ENCODE measurements at regions of chr11 and their contacts with region 1.

Region 1: DNA sequence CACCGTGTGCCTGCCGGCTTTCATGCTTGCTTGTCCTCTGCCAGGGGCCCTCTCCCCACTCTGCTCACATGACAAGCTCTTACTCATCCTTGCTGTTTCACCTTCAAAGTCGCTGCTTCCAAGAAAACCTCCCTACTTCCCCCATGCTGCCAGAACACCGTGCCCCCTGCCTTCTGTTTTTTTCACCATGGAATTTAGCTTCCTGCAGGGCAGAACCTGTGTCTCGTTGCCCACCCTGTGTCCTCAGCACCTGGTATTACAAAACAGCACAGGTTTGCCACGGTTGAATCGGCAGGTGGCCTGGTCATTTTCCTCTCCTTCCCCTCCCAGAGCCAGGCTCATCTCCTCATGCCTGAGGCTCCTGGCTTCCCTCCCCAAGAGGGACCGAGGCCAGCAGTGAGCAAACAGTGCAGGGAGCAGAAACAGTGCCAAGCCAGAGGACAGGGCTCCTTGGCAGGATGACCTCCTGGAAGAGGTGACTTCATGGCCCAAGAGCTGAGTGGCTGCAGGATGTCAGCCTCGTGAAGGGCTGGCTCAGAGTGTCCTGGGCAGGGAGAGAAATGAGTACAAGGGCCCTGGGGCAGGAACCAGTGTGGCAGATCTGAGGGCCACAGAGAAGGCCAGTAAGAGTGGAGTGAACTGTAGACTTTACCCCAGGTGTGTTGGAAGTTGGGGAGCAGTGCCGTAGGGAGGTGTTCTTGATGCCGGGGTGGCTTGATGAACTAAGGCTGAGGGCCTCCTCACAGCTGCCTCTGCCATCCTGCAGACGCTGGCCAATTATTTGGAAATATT is 22.8 kb upstream of the PPFIA1 start:
- DNase-seq: peak; percentile 83 to 92
- H3K4me3 ChIP-seq: peak overlapping the region in 1 of 3 donors; percentile 5
- H3K27ac ChIP-seq: peak overlapping the region; percentile 77 to 93
- H3K4me1 ChIP-seq: peaks cover 0 to 9% of the 10 kb centered on the region in 2 donors
- H3K27me3 ChIP-seq: no peaks in the 10 kb centered on the region
- CTCF ChIP-seq: no peak
- POLR2A ChIP-seq: no peak

Region 2: GRCh38 chr11:70183483-70184169 is 64.0 kb before region 1 on chr11:
- intact Hi-C with region 1: no loop called
- DNase-seq: peak; percentile 85
- H3K4me3 ChIP-seq: no peak overlapping the region
- H3K27ac ChIP-seq: peak overlapping the region; percentile 68 to 72
- H3K4me1 ChIP-seq: peaks cover 0 to 10% of the 10 kb centered on the region in 2 donors
- H3K27me3 ChIP-seq: no peaks in the 10 kb centered on the region
- CTCF ChIP-seq: no peak
- POLR2A ChIP-seq: no peak

Region 3: DNA sequence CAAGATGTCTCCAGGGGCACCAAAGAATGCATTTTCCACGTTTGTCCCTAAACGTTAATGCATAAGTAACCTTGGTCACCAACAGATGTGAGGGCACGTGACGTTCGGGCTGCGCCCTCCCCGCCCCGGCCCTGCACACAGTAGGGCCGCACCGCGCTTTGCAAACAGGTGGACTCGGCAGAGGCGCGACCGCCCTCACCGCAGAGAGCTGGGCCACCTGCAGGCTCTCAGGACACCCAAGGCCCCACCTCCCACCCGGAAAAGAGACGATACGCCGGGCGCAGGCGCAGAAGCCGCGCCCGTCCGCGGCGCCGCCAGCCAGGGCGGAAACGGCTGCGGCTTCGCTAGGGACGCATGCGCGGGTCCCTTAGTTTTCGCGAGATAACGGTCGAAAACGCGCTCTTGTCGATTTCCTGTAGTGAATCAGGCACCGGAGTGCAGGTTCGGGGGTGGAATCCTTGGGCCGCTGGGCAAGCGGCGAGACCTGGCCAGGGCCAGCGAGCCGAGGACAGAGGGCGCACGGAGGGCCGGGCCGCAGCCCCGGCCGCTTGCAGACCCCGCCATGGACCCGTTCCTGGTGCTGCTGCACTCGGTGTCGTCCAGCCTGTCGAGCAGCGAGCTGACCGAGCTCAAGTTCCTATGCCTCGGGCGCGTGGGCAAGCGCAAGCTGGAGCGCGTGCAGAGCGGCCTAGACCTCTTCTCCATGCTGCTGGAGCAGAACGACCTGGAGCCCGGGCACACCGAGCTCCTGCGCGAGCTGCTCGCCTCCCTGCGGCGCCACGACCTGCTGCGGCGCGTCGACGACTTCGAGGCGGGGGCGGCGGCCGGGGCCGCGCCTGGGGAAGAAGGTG is 44.5 kb before region 1 on chr11 and contains the start of gene FADD:
- intact Hi-C with region 1: loop called (anchors 10 kb)
- DNase-seq: peak; percentile 83 to 88
- H3K4me3 ChIP-seq: peak within 1 kb of the TSS; percentile 82 to 98 (median 95)
- H3K27ac ChIP-seq: peak within 1 kb of the TSS; percentile 90 to 94
- H3K4me1 ChIP-seq: peaks cover 6 to 15% of the 10 kb centered on the region in 2 donors
- H3K27me3 ChIP-seq: no peaks in the 10 kb centered on the region
- CTCF ChIP-seq: no peak
- POLR2A ChIP-seq: peak; percentile 56
- total RNA-seq, gene FADD: 17.6 to 33.1 (median 30.2) TPM

Region 4: DNA sequence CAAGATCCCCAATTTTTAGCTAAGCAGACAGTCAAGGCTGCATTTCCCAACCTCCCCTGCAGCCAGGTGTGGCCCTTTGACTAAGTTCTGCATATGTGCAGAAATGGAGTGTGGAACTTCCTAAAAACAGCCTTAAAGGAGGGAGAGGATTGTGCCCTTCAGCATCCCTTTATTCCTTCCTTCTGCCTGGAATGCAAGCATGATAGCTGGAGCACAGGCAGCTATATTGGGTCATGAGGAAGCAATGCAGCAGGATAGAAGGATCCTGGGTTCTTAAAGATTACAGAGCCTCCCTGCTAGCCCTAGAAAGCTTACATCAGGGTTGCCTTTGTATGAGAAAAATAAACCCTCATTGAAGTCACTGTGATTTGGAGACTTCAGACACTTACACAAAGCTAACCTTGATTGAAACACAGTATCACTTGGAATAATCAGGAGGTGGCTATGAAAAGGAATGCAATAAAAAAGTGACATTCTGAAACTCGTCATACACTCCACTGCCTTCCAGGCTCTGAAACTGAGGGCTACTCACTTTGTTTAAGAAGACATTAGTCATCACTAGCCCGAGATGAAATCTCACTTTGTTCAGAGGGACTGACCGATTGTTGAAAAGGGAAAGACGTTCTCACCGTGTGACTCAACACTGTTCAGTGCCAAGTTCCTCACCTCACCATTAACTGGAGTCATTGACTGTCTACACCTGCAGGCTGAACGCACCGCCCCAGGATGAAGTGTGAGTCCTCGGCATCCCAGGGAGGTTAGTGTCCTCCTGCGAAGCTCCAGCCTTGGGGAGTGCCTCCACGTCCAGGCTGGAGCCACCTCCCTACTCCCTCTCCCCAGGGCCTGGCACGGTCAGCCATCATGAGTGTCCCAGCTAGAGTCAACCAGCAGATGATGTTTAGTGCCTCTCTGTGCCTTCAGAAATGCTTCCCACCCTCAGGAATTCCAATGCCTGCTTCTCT is 14.3 kb before region 1 on chr11:
- intact Hi-C with region 1: loop called (anchors 1 kb)
- DNase-seq: peak; percentile 68 to 83
- H3K4me3 ChIP-seq: no peak overlapping the region
- H3K27ac ChIP-seq: peak overlapping the region; percentile 77 to 80
- H3K4me1 ChIP-seq: no peaks in the 10 kb centered on the region
- H3K27me3 ChIP-seq: no peaks in the 10 kb centered on the region
- CTCF ChIP-seq: no peak
- POLR2A ChIP-seq: no peak